GM13976 (cell line): ENCODE measurements at regions of chr13 and their contacts with region 1.

Region 1: GRCh38 chr13:19362946-19363510 is 181.4 kb upstream of the TUBA3C start:
- DNase-seq: no peak
- CTCF ChIP-seq: no peak

Region 2: DNA sequence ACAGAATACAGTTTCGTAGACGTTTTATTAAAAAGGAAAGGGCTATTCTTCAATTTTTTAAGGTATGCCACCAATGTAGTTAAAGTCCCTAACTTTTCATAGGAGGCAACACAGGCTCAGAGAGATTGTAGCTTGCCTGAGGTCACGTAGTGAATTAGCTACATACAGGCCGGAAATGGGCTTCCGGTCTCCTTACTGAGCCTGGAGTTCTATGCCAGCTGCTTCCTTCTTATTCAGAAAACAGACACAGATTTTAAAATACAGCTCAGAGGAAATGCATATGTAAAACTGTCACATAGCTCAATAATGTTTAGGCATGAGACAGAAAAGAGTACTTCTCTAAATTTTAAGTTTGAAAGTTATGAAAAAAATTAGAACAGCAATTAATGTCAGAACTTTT is 96.0 kb before region 1 on chr13:
- in situ Hi-C with region 1: loop called (anchors 25 kb)
- DNase-seq: no peak
- CTCF ChIP-seq: no peak